B cell (primary cell): ENCODE measurements at regions of chrX and their contacts with region 1.

Region 1: GRCh38 chrX:10111364-10112148 is 45.2 kb upstream of the CLCN4 start:
- DNase-seq: peak; percentile 88
- ATAC-seq: peak; percentile 70
- H3K4me3 ChIP-seq: peak overlapping the region in 4 of 5 experiments; percentile 16 to 43 (median 28)
- H3K4me3 Mint-ChIP-seq: peak overlapping the region; percentile 92
- H3K27ac ChIP-seq: peak overlapping the region; percentile 81 to 98
- H3K27ac Mint-ChIP-seq: peak overlapping the region; percentile 100
- H3K4me1 ChIP-seq: peaks cover 79 to 97% of the 10 kb centered on the region in 2 donors
- H3K4me1 Mint-ChIP-seq: peaks cover 77% of the 10 kb centered on the region
- H3K27me3 ChIP-seq: no peaks in the 10 kb centered on the region
- H3K27me3 Mint-ChIP-seq: no peaks in the 10 kb centered on the region
- CTCF ChIP-seq: no peak

Region 2: DNA sequence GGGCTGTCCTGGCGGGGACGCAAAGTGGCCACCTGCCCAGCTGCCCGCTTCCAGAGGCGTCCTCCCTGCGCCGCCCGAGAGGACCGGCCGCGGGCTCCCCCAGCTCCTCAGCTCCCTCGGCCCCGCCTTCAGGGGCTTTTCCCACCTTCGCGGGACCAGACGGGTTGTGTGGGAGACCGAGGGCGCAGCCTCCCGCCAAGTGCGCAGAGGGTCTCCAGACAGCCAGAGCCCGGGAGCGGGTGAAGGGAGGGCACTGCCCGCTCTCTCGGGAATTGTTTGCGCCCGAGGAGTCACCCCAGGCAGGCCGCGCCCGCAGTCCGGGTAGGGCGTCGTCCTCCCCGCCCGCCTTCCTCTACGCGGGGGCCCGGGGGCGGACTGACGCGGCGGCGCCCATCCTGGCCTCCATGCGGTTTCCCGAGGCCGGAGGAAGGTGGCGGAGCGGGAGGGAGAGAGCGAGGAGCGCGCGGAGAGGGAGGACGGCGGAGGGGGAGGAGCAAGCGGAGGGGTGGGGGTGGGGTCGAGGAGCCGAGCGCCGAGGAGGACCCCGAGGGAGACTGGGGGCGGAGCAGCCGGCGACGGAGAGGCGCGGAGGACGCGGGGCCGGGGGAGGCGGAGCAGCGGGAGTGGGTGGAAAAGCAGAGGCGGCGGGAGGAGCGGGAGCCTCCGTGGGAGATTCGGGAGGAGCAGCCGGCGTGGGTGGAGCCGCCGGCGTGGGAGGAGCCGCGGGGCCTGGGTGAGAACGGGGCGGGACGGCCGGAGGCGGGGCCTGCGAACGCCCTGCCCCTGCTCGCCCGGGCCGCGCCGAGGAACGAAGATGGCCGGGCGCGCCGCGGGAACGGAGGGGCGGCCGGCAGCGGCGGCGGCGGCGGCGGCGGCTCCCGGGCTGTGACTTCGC is 96.8 kb before region 1 on chrX:
- CTCF ChIA-PET with region 1: interaction called, 8 read pairs
- POLR2A ChIA-PET with region 1: interaction called, 18 read pairs
- intact Hi-C with region 1: loop called (anchors 2 kb)
- DNase-seq: peak; percentile 87
- ATAC-seq: peak; percentile 87
- H3K4me3 ChIP-seq: peak overlapping the region; percentile 16 to 68 (median 65)
- H3K4me3 Mint-ChIP-seq: peak overlapping the region; percentile 73
- H3K27ac ChIP-seq: peak overlapping the region; percentile 50 to 74
- H3K27ac Mint-ChIP-seq: peak overlapping the region; percentile 84
- H3K4me1 ChIP-seq: peaks cover 25 to 41% of the 10 kb centered on the region in 2 donors
- H3K4me1 Mint-ChIP-seq: peaks cover 51% of the 10 kb centered on the region
- H3K27me3 ChIP-seq: no peaks in the 10 kb centered on the region
- H3K27me3 Mint-ChIP-seq: no peaks in the 10 kb centered on the region
- CTCF ChIP-seq: no peak

Region 3: GRCh38 chrX:10083809-10084208 is 27.7 kb before region 1 on chrX:
- CTCF ChIA-PET with region 1: interaction called, 47 read pairs
- POLR2A ChIA-PET with region 1: interaction called, 13 read pairs
- intact Hi-C with region 1: loop called (anchors 2 kb)
- DNase-seq: no peak
- ATAC-seq: no peak
- H3K4me3 ChIP-seq: peak overlapping the region in 1 of 5 experiments; percentile 41
- H3K4me3 Mint-ChIP-seq: peak overlapping the region; percentile 80
- H3K27ac ChIP-seq: peak overlapping the region; percentile 76 to 78
- H3K27ac Mint-ChIP-seq: peak overlapping the region; percentile 60
- H3K4me1 ChIP-seq: peaks cover 25 to 40% of the 10 kb centered on the region in 2 donors
- H3K4me1 Mint-ChIP-seq: peaks cover 52% of the 10 kb centered on the region
- H3K27me3 ChIP-seq: no peaks in the 10 kb centered on the region
- H3K27me3 Mint-ChIP-seq: no peaks in the 10 kb centered on the region
- CTCF ChIP-seq: no peak

Region 4: DNA sequence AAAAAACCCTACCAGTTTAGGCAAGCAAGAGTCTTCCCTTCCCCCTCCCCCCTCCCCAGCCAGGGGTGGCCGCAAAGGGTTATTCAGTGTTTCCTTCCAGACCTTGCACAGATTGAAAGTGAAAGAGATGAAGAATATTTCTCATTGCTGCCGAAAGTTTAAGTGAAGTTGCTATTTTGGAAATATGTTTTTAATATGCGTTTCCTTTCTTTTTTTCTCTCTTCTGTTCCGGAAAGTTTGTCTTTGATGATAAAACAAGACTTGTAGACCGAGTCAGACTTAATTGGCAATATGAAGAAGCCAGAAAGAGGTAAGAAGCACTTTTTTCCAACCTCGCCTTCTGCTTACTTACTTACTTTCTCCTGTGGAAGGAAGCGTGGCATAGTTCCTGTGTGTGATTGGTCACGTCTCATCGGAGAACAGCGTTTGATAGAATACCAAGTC is 13.3 kb before region 1 on chrX:
- CTCF ChIA-PET with region 1: interaction called, 40 read pairs
- POLR2A ChIA-PET with region 1: interaction called, 45 read pairs
- intact Hi-C with region 1: loop called (anchors 1 kb)
- DNase-seq: peak; percentile 74
- ATAC-seq: peak; percentile 81
- H3K4me3 ChIP-seq: peak overlapping the region; percentile 32 to 64 (median 51)
- H3K4me3 Mint-ChIP-seq: peak overlapping the region; percentile 93
- H3K27ac ChIP-seq: peak overlapping the region; percentile 65 to 80
- H3K27ac Mint-ChIP-seq: peak overlapping the region; percentile 92
- H3K4me1 ChIP-seq: peaks cover 22 to 64% of the 10 kb centered on the region in 2 donors
- H3K4me1 Mint-ChIP-seq: peaks cover 60% of the 10 kb centered on the region
- H3K27me3 ChIP-seq: no peaks in the 10 kb centered on the region
- H3K27me3 Mint-ChIP-seq: no peaks in the 10 kb centered on the region
- CTCF ChIP-seq: no peak